ENCODE measurements at regions of chr4 and their contacts with region 1.

Region 1: GRCh38 chr4:146522098-146522868 is 543 bp upstream of the SLC10A7 start:
- DNase-seq: peak; percentile 79
- H3K4me3 Mint-ChIP-seq: no peak overlapping the region
- H3K27ac Mint-ChIP-seq: no peak overlapping the region
- H3K4me1 Mint-ChIP-seq: peaks cover 31% of the 10 kb centered on the region
- H3K27me3 Mint-ChIP-seq: no peaks in the 10 kb centered on the region

Region 2: GRCh38 chr4:145481164-145481941 is 1040.9 kb before region 1 on chr4 and contains the start of gene SMAD1:
- intact Hi-C with region 1: loop called (anchors 5 kb)
- DNase-seq: peak; percentile 11
- H3K4me3 Mint-ChIP-seq: peak within 1 kb of the TSS; percentile 73
- H3K27ac Mint-ChIP-seq: peak within 1 kb of the TSS; percentile 49
- H3K4me1 Mint-ChIP-seq: peaks cover 6% of the 10 kb centered on the region
- H3K27me3 Mint-ChIP-seq: peaks cover 33% of the 10 kb centered on the region
- total RNA-seq, gene SMAD1: 3.1 and 3.2 TPM in 2 replicates

Region 3: DNA sequence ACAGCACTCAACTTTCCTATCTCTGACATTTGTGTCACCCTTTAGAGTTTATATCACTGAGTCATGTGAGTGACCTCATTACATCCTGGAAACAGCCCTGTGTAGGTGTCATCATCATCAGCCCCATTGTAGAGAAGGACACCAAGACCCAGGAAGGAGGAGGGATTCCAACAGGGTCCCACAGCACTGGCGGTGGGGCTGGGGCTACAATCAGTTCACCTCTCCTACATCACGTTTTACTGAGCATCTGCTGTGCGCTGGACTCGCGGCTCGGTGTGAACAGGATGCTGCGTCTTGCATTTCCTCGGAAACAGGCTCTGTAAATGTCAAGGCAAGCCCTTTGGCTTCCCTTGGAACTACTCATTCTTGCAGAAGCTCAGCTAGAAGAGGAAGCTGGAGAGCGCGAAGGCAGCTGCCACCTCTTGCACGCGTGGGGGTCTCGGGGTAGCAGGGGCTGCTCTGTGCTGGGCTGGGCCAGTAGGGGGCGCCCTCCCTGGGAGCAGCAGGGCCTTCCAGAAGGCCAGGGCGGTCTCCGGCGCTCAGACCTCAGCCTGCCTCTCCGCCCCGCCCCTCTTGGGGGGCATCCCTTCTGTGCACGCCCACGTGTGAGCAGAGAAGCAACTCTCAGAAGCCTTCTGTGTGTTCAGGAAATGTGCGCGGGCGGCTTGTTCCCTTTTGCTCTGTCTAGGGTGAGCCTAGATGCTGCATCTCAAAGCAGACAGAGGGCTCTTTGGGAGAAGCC is 279.0 kb before region 1 on chr4:
- intact Hi-C with region 1: loop called (anchors 1 kb)
- DNase-seq: peak; percentile 16
- H3K4me3 Mint-ChIP-seq: peak overlapping the region; percentile 16
- H3K27ac Mint-ChIP-seq: peak overlapping the region; percentile 84
- H3K4me1 Mint-ChIP-seq: peaks cover 35% of the 10 kb centered on the region
- H3K27me3 Mint-ChIP-seq: peaks cover 5% of the 10 kb centered on the region

Region 4: DNA sequence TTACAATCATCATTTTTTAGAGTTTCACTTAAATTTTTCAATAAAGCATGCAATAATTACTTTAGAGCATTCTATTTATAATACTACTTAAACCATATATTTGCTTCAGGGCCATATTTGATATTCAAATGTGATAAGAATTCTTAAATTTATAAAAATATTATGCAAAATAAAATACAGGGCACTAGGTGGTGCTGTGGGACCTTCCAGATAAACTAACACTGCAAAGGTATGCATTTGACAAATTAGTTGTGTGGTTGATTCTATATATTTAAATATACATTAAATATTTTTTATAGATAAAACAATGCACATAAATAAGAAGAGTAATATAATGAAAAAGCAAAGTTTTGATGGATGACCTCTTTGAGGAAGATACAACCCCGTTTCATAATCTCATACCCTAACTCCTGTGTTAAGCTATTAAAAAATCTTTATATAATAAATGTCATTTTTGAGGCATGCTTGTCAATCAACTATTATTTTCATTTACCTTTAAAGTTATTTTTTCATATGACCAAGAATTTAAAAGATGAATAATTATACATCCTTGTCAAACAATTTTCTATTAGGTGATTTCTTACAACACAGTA is 179.6 kb before region 1 on chr4:
- intact Hi-C with region 1: loop called (anchors 2 kb)
- DNase-seq: no peak
- H3K4me3 Mint-ChIP-seq: no peak overlapping the region
- H3K27ac Mint-ChIP-seq: no peak overlapping the region
- H3K4me1 Mint-ChIP-seq: peaks cover 7% of the 10 kb centered on the region
- H3K27me3 Mint-ChIP-seq: peaks cover 2% of the 10 kb centered on the region

Region 5: DNA sequence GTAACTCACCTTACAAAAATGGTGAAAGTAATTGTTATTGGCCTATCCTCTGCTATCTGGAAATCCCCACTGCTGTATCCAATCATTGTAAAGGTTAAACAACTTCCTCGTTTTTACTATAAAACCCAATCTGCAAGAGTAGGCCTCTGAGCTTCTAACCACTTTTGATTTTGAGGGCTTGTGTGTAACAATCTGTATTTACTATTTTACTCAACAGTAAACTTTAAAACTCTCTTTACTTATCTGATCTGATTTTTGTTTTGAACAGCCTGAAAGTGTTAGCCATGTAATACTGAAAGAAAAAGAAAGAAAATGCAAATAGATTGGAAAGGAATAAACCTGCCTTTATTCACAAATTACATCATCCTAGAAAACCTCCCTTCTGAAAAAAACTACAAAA is 63.7 kb before region 1 on chr4:
- intact Hi-C with region 1: loop called (anchors 1 kb)
- DNase-seq: no peak
- H3K4me3 Mint-ChIP-seq: peak overlapping the region; percentile 63
- H3K27ac Mint-ChIP-seq: peak overlapping the region; percentile 88
- H3K4me1 Mint-ChIP-seq: peaks cover 26% of the 10 kb centered on the region
- H3K27me3 Mint-ChIP-seq: no peaks in the 10 kb centered on the region

Region 6: GRCh38 chr4:146638801-146639605 is 116.7 kb after region 1 on chr4 and contains the start of gene POU4F2:
- intact Hi-C with region 1: loop called (anchors 5 kb)
- DNase-seq: no peak
- H3K4me3 Mint-ChIP-seq: no peak within 1 kb of the TSS
- H3K27ac Mint-ChIP-seq: peak within 1 kb of the TSS; percentile 81
- H3K4me1 Mint-ChIP-seq: no peaks in the 10 kb centered on the region
- H3K27me3 Mint-ChIP-seq: peaks cover 69% of the 10 kb centered on the region
- total RNA-seq, gene POU4F2: not detected in 2 replicates

Measured in activated T-helper 1 cell treated with anti-CD3 and anti-CD28 coated beads, Interleukin-12 subunit alpha, Interleukin-12 subunit beta, Interleukin-2, Interleukin-4 antibody, amounts not matched to agents 30 ng/mL and 10 ng/mL and 1 ng/mL, durations not matched to agents 14 hours and 24 hours and 36 hours (primary cell).